Mammary epithelial cell (primary cell): ENCODE measurements at regions of chr5 and their contacts with region 1.

Region 1: DNA sequence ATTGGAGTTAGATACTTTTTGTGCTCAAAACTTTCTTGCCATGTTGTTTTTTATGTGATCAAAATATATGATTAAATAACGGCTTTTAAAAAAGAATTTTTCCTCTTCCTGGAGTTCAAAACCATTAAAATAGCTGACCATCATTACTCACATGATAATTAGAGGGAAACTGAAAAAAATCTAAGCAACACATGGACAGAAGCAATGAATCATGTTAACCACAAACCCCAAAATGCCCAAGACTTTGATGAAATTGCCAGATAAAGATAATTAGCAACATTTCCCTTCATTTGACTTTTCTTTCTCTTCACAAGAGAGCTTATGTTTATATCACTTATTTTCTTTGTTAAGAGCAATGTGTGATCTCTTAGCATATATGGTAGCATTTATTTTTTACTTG is 1294.2 kb downstream of the EFNA5 start:
- DNase-seq: peak; percentile 74
- H3K4me3 ChIP-seq: no peak overlapping the region
- H3K27ac ChIP-seq: no peak overlapping the region
- H3K4me1 ChIP-seq: peaks cover 8% of the 10 kb centered on the region
- H3K27me3 ChIP-seq: peaks cover 18% of the 10 kb centered on the region
- CTCF ChIP-seq: no peak

Region 2: GRCh38 chr5:106397700-106398099 is 21.2 kb after region 1 on chr5:
- CTCF ChIA-PET with region 1: no interaction called
- dilution Hi-C with region 1: no loop called
- in situ Hi-C with region 1: no loop called
- intact Hi-C with region 1: loop called (anchors 2 kb)
- DNase-seq: peak; percentile 98
- H3K4me3 ChIP-seq: no peak overlapping the region
- H3K27ac ChIP-seq: peak overlapping the region; percentile 97
- H3K4me1 ChIP-seq: peaks cover 14% of the 10 kb centered on the region
- H3K27me3 ChIP-seq: no peaks in the 10 kb centered on the region
- CTCF ChIP-seq: no peak